Naive thymus-derived CD4-positive, alpha-beta T cell (primary cell): ENCODE measurements at regions of chr12 and their contacts with region 1.

Region 1: GRCh38 chr12:58011676-58012075 is 70.3 kb downstream of the ATP23 start:
- DNase-seq: no peak
- ATAC-seq: no peak
- H3K4me3 ChIP-seq: no peak overlapping the region
- H3K4me3 Mint-ChIP-seq: no peak overlapping the region
- H3K27ac ChIP-seq: no peak overlapping the region
- H3K27ac Mint-ChIP-seq: no peak overlapping the region
- H3K4me1 ChIP-seq: no peaks in the 10 kb centered on the region
- H3K4me1 Mint-ChIP-seq: peaks cover 0 to 2% (median 0%) of the 10 kb centered on the region in 7 donors
- H3K27me3 ChIP-seq: no peaks in the 10 kb centered on the region
- H3K27me3 Mint-ChIP-seq: peaks cover 0 to 14% (median 0%) of the 10 kb centered on the region in 5 donors

Region 2: GRCh38 chr12:57952766-57953165 is 58.9 kb before region 1 on chr12:
- CTCF ChIA-PET with region 1: no interaction called
- POLR2A ChIA-PET with region 1: no interaction called
- intact Hi-C with region 1: no loop called
- DNase-seq: no peak
- ATAC-seq: no peak
- H3K4me3 ChIP-seq: no peak overlapping the region
- H3K4me3 Mint-ChIP-seq: no peak overlapping the region
- H3K27ac ChIP-seq: no peak overlapping the region
- H3K27ac Mint-ChIP-seq: no peak overlapping the region
- H3K4me1 ChIP-seq: no peaks in the 10 kb centered on the region
- H3K4me1 Mint-ChIP-seq: peaks cover 0 to 6% (median 0%) of the 10 kb centered on the region in 7 donors
- H3K27me3 ChIP-seq: no peaks in the 10 kb centered on the region
- H3K27me3 Mint-ChIP-seq: no peaks in the 10 kb centered on the region

Region 3: DNA sequence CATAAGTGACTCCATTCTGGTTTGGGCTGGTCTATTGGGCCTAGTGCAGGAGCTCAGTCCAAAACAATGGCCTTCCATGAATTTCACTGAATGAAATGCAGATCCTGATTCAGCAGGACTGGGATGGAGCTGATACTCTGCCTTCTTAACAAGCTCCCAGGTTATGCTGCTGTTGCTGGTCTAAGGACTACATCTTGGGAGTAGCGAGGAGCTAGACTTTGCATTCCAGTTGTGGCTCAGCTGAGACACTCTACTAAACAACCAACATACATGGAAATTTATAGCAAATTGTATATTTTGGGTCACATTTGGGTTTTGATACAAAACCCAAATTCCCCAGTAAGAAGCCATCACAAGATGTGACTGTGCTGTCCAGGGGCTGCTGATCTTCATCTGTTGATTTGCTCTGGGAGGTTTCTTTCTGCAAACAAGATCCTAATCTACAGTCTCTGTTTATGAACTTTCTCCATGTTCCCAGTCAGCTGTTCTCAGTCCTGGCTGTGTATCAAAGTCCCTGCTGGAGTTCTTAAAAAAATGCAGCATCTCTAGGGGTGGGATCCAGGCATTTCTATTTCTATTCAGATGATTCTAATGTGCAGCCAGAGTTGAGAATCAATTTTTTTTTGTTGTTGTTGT is 14.6 kb after region 1 on chr12:
- CTCF ChIA-PET with region 1: no interaction called
- POLR2A ChIA-PET with region 1: no interaction called
- intact Hi-C with region 1: loop called in 1 of 2 experiments (anchors 1 kb)
- DNase-seq: no peak
- ATAC-seq: no peak
- H3K4me3 ChIP-seq: no peak overlapping the region
- H3K4me3 Mint-ChIP-seq: no peak overlapping the region
- H3K27ac ChIP-seq: no peak overlapping the region
- H3K27ac Mint-ChIP-seq: no peak overlapping the region
- H3K4me1 ChIP-seq: no peaks in the 10 kb centered on the region
- H3K4me1 Mint-ChIP-seq: no peaks in the 10 kb centered on the region
- H3K27me3 ChIP-seq: no peaks in the 10 kb centered on the region
- H3K27me3 Mint-ChIP-seq: peaks cover 0 to 15% (median 7%) of the 10 kb centered on the region in 5 donors

Region 4: DNA sequence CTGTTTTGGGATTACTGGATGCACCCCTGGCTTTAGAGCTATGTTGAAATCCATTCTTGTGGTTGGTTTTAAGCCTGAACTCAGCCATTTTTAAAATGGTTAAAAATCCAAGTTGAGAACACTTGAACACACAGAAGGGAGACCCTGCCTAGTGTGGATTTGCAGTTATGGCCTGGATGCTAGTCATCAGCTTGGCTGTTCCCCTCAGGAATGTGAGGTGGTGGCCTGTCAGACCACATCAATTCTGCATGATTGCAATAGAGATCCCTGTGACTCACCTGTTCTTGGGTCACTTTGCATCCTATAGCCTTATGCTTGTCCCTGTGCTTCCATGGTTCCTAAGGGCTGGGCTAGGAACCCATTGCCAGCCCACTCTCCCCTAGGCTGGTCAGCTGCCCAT is 383.8 kb after region 1 on chr12:
- CTCF ChIA-PET with region 1: no interaction called
- POLR2A ChIA-PET with region 1: no interaction called
- intact Hi-C with region 1: no loop called
- DNase-seq: no peak
- ATAC-seq: no peak
- H3K4me3 ChIP-seq: no peak overlapping the region
- H3K4me3 Mint-ChIP-seq: no peak overlapping the region
- H3K27ac ChIP-seq: no peak overlapping the region
- H3K27ac Mint-ChIP-seq: no peak overlapping the region
- H3K4me1 ChIP-seq: no peaks in the 10 kb centered on the region
- H3K4me1 Mint-ChIP-seq: no peaks in the 10 kb centered on the region
- H3K27me3 ChIP-seq: no peaks in the 10 kb centered on the region
- H3K27me3 Mint-ChIP-seq: peaks cover 0 to 11% (median 2%) of the 10 kb centered on the region in 5 donors